Left lung (tissue), 14 donors: ENCODE measurements at regions of chr11 and their contacts with region 1.

Region 1: GRCh38 chr11:74929431-74930363 is 19.2 kb downstream of the XRRA1 start:
- DNase-seq: peak in 3 of 4 donors; percentile 46 to 89 (median 59)
- ATAC-seq: peak; percentile 96
- H3K4me3 ChIP-seq: no peak overlapping the region
- H3K27ac ChIP-seq: no peak overlapping the region
- H3K4me1 ChIP-seq: no peaks in the 10 kb centered on the region
- H3K27me3 ChIP-seq: no peaks in the 10 kb centered on the region
- CTCF ChIP-seq: peak; percentile 75 to 78

Region 2: DNA sequence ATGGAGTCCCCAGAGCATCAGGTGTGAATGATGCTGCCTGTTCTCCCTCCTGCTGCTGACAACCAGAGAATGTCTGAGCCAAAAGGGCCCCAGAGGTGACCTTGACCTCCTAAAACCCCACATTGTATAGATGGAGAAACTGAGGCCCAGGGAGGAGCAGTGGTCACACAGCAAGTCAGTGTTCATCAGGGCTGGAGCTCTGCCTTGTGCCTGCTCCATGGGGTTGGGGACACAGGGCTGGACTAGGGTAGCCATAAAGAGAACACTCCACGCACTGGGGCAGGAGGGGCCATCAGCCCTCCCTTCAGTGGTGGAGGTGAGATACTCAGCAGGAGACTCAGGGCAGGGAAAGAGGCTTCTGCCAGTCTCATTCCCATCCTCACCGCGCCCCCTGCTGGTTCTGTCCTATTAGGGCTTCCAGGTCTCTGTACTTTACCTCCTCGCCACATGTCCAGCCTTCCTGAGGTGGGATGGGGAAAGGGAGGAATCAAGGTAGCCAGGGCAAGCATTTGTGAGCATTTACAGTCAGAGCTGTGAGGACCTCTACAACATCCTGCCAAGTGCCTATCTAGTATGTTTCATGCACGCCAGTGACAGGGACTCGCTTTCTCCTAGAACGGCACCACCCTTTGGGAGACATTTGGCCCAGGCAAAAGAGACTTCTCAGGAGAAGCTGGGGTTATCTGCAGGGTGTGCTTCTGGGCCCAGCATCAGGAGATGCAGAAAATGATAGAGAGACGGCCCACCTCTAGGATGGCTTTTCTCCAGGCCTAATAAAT is 102.3 kb after region 1 on chr11:
- intact Hi-C with region 1: loop called in 1 of 2 experiments (anchors 5 kb)
- DNase-seq: peak in 3 of 4 donors; percentile 51 to 88 (median 74)
- ATAC-seq: peak; percentile 89
- H3K4me3 ChIP-seq: no peak overlapping the region
- H3K27ac ChIP-seq: no peak overlapping the region
- H3K4me1 ChIP-seq: no peaks in the 10 kb centered on the region
- H3K27me3 ChIP-seq: no peaks in the 10 kb centered on the region
- CTCF ChIP-seq: peak; percentile 52 to 69